RWPE1 (cell line): ENCODE measurements at regions of chr1 and their contacts with region 1.

Region 1: DNA sequence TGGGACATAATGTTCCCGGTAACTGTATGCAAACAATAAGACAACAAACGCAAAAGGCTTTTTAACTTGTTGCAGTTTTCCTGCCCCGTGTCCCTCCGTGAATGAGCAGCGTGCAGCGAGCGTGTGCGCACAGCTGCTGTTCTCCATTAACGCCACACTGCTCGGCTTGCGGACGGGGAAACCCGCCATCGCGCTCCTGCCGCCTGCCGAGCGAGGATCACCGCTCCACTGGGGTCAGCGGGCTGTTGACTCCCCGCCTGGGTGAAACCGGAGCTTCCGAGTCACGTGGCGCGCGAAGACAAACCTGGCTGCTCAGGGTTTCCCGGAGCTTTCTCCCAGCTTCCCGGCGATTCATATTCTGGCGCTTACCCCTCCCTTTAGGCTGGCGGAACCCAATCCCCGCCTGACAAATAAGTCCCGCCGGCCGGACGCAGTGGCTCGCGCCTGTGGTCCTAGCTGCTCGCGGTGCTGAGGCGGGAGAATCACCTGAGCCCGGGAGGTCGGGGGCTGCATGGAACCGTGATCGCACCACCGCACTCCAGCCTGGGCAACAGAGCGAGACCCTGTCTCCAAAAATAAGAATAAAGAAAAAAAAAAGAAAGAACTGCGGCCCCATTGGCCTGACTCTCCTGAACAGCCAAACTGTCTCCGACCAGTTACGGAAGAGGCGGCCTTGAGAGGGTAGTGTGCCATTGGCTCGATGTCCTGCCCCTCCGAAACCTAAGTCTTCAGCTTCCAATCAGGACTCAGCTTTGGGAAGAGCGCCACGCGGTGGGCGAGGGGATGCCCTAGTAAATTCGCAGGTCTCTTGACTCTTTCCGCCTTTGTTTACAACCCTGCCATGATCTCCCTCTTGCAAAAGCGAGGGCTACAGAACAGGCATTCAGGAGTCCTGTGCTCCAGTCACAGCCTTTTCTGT is at the start of gene CREB3L4:
- DNase-seq: peak; percentile 91
- H3K27ac ChIP-seq: peak within 1 kb of the TSS; percentile 98
- CTCF ChIP-seq: peak; percentile 54

Region 2: DNA sequence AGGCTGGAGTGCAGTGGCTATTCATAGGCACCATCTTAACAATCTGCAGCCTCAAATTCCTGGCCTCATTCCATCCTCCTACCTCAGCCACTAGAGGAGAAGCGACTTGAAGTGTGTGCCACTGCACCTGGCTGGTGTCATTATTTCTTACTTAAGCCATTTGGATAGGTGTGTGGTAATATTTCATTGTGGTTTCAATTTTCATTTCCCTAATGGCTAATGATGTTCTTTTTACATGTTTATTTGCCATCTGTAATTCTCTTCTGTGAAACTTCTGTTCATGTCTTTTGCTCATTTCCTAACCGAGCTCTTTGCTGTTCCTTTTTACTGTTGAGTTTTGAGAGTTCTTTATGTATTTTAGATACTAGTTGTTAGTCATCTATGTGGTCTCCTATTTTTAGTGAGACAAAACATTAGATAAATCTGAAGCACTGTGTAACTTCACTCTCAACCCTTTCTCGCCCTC is 125.3 kb before region 1 on chr1:
- CTCF ChIA-PET with region 1: no interaction called
- POLR2A ChIA-PET with region 1: interaction called, 10 read pairs
- DNase-seq: no peak
- H3K27ac ChIP-seq: no peak overlapping the region
- CTCF ChIP-seq: no peak

Region 3: GRCh38 chr1:153860285-153860684 is 107.1 kb before region 1 on chr1:
- CTCF ChIA-PET with region 1: no interaction called
- POLR2A ChIA-PET with region 1: interaction called, 10 read pairs
- DNase-seq: no peak
- H3K27ac ChIP-seq: no peak overlapping the region
- CTCF ChIP-seq: no peak

Region 4: GRCh38 chr1:153977250-153978240 is 10.2 kb after region 1 on chr1 and contains the start of gene JTB:
- CTCF ChIA-PET with region 1: interaction called, 5 read pairs
- POLR2A ChIA-PET with region 1: interaction called, 16 read pairs
- DNase-seq: peak; percentile 83
- H3K27ac ChIP-seq: peak within 1 kb of the TSS; percentile 84
- CTCF ChIP-seq: no peak